ENCODE measurements at regions of chr20 and their contacts with region 1.

Region 1: DNA sequence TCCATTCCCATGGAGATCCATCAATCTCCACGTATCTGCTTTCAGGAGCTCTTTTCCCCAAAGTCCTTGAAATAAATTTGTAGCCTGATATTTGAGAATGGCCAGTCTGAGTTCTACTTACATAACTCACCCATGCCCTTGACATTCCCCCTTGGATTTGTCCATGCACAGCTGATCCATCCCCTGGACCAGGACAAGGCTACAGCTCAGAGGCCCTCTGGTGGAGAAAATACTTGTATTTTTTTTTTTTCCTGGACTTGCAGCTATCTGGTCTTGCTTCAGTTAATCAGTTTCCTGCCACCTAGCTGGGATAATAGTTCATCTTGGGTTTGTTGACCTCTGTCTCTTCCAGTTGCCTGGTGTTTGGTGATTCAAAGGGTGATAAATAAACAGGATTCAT is 467.6 kb downstream of the DHX35 start:
- DNase-seq: no peak

Region 2: GRCh38 chr20:39112178-39112743 is 317.5 kb before region 1 on chr20:
- intact Hi-C with region 1: loop called (anchors 5 kb)
- DNase-seq: no peak

Region 3: DNA sequence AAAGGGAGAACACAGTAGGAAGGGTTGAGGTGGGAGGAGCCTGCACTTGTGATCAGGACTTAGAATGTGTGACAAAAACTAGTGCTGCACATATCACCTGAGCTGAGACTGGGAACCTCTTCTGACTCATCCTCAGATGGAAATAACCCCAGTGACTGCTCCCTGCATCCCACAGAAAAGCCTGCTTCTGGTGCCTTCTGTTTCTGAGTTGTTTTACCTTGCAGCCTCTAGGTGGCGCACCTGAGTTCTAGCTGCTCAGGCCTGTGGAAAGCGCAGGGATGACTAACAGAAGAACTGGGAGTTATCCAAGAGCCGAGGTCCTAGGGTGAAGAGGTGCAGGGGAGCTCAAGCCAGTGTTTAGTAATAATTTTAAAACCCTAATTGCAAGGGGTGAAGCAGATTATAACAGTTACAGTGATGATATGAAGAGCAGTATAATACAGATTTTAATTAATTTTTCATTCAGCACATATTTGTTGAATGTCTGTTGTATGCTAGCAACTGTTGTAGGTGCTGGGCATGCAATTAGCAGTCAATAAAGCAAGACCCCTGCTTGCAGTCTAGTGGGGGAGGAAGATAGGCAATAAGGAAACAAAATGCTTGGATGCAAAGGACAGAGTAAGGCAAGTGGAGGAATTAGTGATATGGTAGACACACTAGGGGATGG is 165.1 kb before region 1 on chr20:
- intact Hi-C with region 1: loop called (anchors 5 kb)
- DNase-seq: no peak

Measured in cardiac septum (tissue), 1 donor.